ENCODE measurements at regions of chr6 and their contacts with region 1.

Region 1: GRCh38 chr6:47787620-47788497 is 6.0 kb downstream of the OPN5 start:
- DNase-seq: peak; percentile 70
- H3K4me3 Mint-ChIP-seq: no peak overlapping the region
- H3K27ac Mint-ChIP-seq: no peak overlapping the region
- H3K4me1 Mint-ChIP-seq: peaks cover 6% of the 10 kb centered on the region
- H3K27me3 Mint-ChIP-seq: no peaks in the 10 kb centered on the region
- CTCF ChIP-seq: peak; percentile 89

Region 2: GRCh38 chr6:47473791-47474351 is 314.0 kb before region 1 on chr6:
- CTCF ChIA-PET with region 1: no interaction called
- intact Hi-C with region 1: no loop called
- DNase-seq: no peak
- H3K4me3 Mint-ChIP-seq: peak overlapping the region; percentile 20
- H3K27ac Mint-ChIP-seq: peak overlapping the region; percentile 66
- H3K4me1 Mint-ChIP-seq: peaks cover 30% of the 10 kb centered on the region
- H3K27me3 Mint-ChIP-seq: no peaks in the 10 kb centered on the region
- CTCF ChIP-seq: no peak

Region 3: GRCh38 chr6:47581591-47581990 is 206.3 kb before region 1 on chr6:
- CTCF ChIA-PET with region 1: no interaction called
- intact Hi-C with region 1: no loop called
- DNase-seq: no peak
- H3K4me3 Mint-ChIP-seq: no peak overlapping the region
- H3K27ac Mint-ChIP-seq: no peak overlapping the region
- H3K4me1 Mint-ChIP-seq: peaks cover 10% of the 10 kb centered on the region
- H3K27me3 Mint-ChIP-seq: no peaks in the 10 kb centered on the region
- CTCF ChIP-seq: no peak

Region 4: GRCh38 chr6:48087448-48087847 is 299.6 kb after region 1 on chr6:
- CTCF ChIA-PET with region 1: interaction called, 3 read pairs
- intact Hi-C with region 1: loop called (anchors 5 kb)
- DNase-seq: no peak
- H3K4me3 Mint-ChIP-seq: no peak overlapping the region
- H3K27ac Mint-ChIP-seq: no peak overlapping the region
- H3K4me1 Mint-ChIP-seq: no peaks in the 10 kb centered on the region
- H3K27me3 Mint-ChIP-seq: no peaks in the 10 kb centered on the region
- CTCF ChIP-seq: no peak

Region 5: GRCh38 chr6:48476257-48476656 is 688.4 kb after region 1 on chr6:
- CTCF ChIA-PET with region 1: interaction called, 13 read pairs
- intact Hi-C with region 1: loop called (anchors 5 kb)
- DNase-seq: peak; percentile 10
- H3K4me3 Mint-ChIP-seq: no peak overlapping the region
- H3K27ac Mint-ChIP-seq: no peak overlapping the region
- H3K4me1 Mint-ChIP-seq: no peaks in the 10 kb centered on the region
- H3K27me3 Mint-ChIP-seq: no peaks in the 10 kb centered on the region
- CTCF ChIP-seq: no peak

Region 6: DNA sequence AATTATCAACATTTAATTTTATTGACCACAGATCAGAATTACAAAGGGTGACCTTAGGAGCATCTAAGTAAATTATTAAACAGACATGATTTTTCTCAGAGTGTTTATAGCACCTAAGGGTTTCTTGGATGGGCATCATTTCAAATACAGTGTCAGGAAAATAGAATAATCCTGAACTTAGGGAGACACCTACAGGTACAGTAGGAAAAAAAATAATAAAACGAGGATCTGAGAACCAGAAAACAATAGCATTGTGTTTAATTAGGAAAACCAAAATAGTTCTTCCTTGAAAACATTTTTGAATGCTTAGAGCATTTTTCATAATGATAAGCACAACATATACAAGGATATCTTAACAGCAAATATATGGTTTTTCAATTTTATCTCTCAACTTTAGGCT is 1636.0 kb after region 1 on chr6:
- CTCF ChIA-PET with region 1: interaction called, 4 read pairs
- intact Hi-C with region 1: loop called (anchors 2 kb)
- DNase-seq: no peak
- H3K4me3 Mint-ChIP-seq: no peak overlapping the region
- H3K27ac Mint-ChIP-seq: no peak overlapping the region
- H3K4me1 Mint-ChIP-seq: no peaks in the 10 kb centered on the region
- H3K27me3 Mint-ChIP-seq: no peaks in the 10 kb centered on the region
- CTCF ChIP-seq: peak; percentile 34

Measured in Calu3 (cell line).